Testis (tissue), 5 donors: ENCODE measurements at regions of chr1 and their contacts with region 1.

Region 1: DNA sequence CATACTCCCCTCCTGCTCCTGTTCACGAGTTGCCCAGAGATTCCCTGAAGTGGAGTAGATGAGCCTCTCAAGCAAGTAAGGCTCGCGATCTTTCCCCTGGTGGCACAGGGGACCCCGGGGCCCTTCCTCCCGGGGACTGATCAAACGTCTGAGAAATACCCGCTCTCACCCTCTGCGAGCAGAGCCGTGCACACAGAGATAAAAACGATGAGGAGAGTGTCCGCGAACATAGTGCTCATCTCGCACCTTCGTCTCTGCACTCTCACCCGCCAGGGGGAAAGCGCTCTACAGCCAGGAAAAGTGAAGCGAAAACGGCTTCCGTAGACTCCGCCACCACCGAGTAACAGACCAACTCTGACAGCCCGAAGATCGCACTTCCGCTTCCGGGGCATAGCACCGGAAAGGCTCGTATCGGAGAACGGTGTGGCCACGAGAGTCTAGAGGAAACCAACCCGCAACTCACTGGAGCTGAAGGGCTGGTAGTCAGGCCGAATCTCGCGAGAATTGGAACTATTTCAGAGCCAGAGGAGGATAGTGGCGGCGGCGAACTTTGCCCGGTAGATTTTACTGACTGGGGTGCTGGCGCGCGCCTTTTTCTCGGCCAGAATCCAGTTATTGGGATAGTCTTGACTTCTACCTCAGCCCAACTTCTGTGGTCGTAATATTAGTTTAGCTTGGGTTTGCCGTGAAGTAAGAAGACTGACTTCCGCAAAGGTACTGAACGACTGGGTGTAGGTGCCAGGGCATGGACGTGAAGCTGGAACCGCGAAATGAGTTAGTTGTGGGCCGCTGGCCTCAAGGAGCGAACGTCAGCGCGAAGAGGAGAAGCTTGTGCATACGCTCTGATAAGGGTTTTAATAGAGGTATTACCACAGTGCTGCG is at the start of gene TMCO1:
- DNase-seq: peak; percentile 99
- H3K4me3 ChIP-seq: peak within 1 kb of the TSS; percentile 72 to 74
- H3K27ac ChIP-seq: peak within 1 kb of the TSS; percentile 72 to 85
- H3K4me1 ChIP-seq: peaks cover 5% of the 10 kb centered on the region
- H3K27me3 ChIP-seq: no peaks in the 10 kb centered on the region
- CTCF ChIP-seq: peak in 1 of 3 experiments; percentile 5
- POLR2A ChIP-seq: no peak
- total RNA-seq, gene TMCO1: 97.5 to 114 TPM

Region 2: GRCh38 chr1:165630629-165631341 is 138.0 kb before region 1 on chr1 and contains the start of gene MGST3:
- intact Hi-C with region 1: loop called (anchors 10 kb)
- DNase-seq: peak; percentile 97
- H3K4me3 ChIP-seq: peak within 1 kb of the TSS; percentile 74 to 79
- H3K27ac ChIP-seq: peak within 1 kb of the TSS; percentile 84 to 91
- H3K4me1 ChIP-seq: peaks cover 37% of the 10 kb centered on the region
- H3K27me3 ChIP-seq: no peaks in the 10 kb centered on the region
- CTCF ChIP-seq: peak in 2 of 3 experiments; percentile 14 to 16
- POLR2A ChIP-seq: peak; percentile 21
- total RNA-seq, gene MGST3: 209 to 278 TPM

Region 3: GRCh38 chr1:166064313-166064926 is 295.7 kb after region 1 on chr1:
- intact Hi-C with region 1: no loop called
- DNase-seq: no peak
- H3K4me3 ChIP-seq: no peak overlapping the region
- H3K27ac ChIP-seq: no peak overlapping the region
- H3K4me1 ChIP-seq: no peaks in the 10 kb centered on the region
- H3K27me3 ChIP-seq: no peaks in the 10 kb centered on the region
- CTCF ChIP-seq: no peak
- POLR2A ChIP-seq: no peak